ENCODE measurements at regions of chr10 and their contacts with region 1.

Region 1: GRCh38 chr10:58299580-58299979 is 30.6 kb downstream of the CISD1 start:
- DNase-seq: peak; percentile 71 to 83 (median 77)
- ATAC-seq: peak; percentile 99
- H3K4me3 ChIP-seq: no peak overlapping the region
- H3K27ac ChIP-seq: no peak overlapping the region
- H3K4me1 ChIP-seq: no peaks in the 10 kb centered on the region
- H3K27me3 ChIP-seq: no peaks in the 10 kb centered on the region
- CTCF ChIP-seq: peak; percentile 87 to 92 (median 87)
- EP300 ChIP-seq: no peak
- POLR2A ChIP-seq: no peak
- RAD21 ChIP-seq: peak; percentile 88 to 96

Region 2: DNA sequence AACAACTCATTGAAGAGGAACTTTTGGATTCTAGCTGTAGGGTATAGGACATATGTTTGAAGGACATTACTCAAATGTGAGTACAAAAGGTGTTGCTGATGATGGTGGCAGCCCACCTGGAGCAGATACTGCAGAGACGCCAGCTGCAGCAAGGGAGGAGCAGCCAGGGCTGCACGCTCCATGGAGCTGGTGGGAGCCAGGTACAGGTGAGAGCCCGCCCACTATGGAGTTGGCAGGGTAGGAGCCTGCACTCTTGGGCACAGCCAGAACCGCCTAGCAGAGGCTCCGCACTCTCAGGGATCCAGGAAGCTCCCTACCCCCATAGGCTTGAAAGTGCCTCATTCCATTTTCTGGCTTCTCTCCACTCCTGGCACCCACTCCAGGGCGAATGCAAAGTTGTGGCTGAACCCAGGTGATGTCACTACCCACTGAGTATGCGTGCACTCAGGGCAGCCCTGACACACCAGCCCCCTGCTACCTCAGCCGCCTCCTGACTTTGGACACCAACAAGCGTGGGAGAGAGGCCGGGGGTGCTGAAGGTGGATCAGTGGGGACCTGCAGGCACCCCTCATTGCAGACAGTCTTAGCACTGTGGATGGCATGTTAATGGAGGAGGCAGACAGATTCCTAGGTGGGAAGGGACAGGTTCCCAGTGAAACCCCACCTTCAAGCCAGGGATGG is 793.0 kb before region 1 on chr10:
- CTCF ChIA-PET with region 1: no interaction called
- POLR2A ChIA-PET with region 1: no interaction called
- in situ Hi-C with region 1: no loop called
- intact Hi-C with region 1: no loop called
- DNase-seq: no peak
- ATAC-seq: no peak
- H3K4me3 ChIP-seq: no peak overlapping the region
- H3K27ac ChIP-seq: no peak overlapping the region
- H3K4me1 ChIP-seq: no peaks in the 10 kb centered on the region
- H3K27me3 ChIP-seq: no peaks in the 10 kb centered on the region
- CTCF ChIP-seq: no peak
- EP300 ChIP-seq: no peak
- POLR2A ChIP-seq: no peak
- RAD21 ChIP-seq: no peak

Region 3: GRCh38 chr10:58531084-58531695 is 231.6 kb after region 1 on chr10:
- CTCF ChIA-PET with region 1: no interaction called
- POLR2A ChIA-PET with region 1: no interaction called
- in situ Hi-C with region 1: no loop called
- intact Hi-C with region 1: loop called (anchors 1 kb)
- DNase-seq: peak; percentile 21 to 45 (median 38)
- ATAC-seq: peak; percentile 75
- H3K4me3 ChIP-seq: no peak overlapping the region
- H3K27ac ChIP-seq: no peak overlapping the region
- H3K4me1 ChIP-seq: no peaks in the 10 kb centered on the region
- H3K27me3 ChIP-seq: no peaks in the 10 kb centered on the region
- CTCF ChIP-seq: peak; percentile 38 to 65 (median 61); a peak in 5 of 6 replicates
- EP300 ChIP-seq: no peak
- POLR2A ChIP-seq: no peak
- RAD21 ChIP-seq: peak; percentile 43 to 59; a peak in 3 of 4 replicates

Region 4: DNA sequence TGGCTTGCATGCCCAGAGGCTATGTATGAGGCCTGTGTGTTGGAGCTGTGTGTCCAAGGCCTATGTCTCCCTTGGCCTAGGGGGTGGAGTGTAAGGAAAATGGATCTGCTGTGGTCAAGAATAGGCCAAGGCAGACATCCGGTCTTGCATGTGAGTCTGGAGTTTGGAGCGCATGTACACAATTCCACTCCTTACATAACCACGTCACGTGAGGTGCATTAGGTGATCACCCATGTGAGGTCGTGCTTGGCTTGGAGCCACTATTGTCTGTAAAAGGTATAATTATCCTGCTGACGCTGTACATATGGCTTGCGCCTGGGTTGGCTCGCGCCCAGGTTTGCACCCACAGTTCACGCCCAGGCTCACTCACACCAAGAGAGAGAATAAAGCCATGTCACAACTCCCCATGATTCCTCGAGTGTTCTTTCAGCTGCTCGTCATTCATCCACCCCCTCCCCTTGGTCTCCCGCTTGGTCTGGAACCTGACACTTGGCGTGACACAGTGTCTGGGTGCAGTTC is 318.6 kb after region 1 on chr10:
- CTCF ChIA-PET with region 1: no interaction called
- POLR2A ChIA-PET with region 1: no interaction called
- in situ Hi-C with region 1: no loop called
- intact Hi-C with region 1: no loop called
- DNase-seq: no peak
- ATAC-seq: no peak
- H3K4me3 ChIP-seq: no peak overlapping the region
- H3K27ac ChIP-seq: no peak overlapping the region
- H3K4me1 ChIP-seq: no peaks in the 10 kb centered on the region
- H3K27me3 ChIP-seq: no peaks in the 10 kb centered on the region
- CTCF ChIP-seq: no peak
- EP300 ChIP-seq: no peak
- POLR2A ChIP-seq: no peak
- RAD21 ChIP-seq: no peak

Measured in K562 (cell line).